Mammary epithelial cell (primary cell): ENCODE measurements at regions of chr12 and their contacts with region 1.

Region 1: DNA sequence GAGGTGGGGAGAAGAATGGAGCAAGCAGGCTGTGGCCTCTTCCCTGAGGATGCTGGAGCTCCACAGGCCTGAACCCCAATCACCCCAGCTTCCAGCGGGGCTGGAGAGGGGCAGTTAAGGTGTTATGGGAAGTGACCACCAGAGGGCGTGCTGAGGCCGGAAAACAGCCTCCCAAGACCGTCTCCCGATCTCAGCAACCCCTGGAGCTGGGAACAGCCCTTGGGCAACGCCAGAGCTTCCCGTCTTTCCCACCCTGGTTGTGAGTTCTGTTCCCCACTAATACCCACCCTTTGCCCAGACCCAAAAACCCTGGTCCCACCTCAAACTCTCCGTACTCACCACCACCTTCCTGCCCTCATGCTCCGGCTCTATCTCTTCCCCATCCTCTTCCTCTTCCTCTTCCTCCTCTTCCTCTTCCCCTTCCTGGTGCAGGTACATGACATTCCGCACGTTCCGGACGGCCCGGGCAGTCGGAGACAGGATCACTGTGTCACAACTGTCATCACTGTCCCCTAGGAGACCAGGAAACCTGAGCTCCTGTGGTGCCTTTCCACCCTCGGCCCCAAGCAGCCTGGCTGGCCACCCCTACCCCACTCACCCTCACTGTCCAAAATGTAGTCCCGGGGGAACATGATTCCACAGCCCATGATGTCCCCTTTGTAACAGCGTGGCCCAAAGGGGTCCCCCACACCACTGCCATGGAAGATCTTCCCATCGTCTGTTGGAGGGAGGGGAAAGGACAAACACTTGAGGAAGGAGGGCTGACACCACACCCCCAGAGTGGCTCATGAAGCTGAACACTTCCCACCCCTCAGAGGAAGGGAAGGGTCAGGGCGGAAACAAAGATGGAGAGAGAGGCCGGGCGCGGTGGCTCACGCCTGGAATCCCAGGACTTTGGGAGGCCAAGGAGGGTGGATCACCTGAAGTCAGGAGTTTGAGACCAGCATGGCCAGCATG is 12.9 kb downstream of the SPRYD3 start:
- DNase-seq: peak; percentile 55
- H3K4me3 ChIP-seq: no peak overlapping the region
- H3K27ac ChIP-seq: no peak overlapping the region
- H3K4me1 ChIP-seq: peaks cover 30% of the 10 kb centered on the region
- H3K27me3 ChIP-seq: no peaks in the 10 kb centered on the region
- CTCF ChIP-seq: peak; percentile 74 to 81

Region 2: DNA sequence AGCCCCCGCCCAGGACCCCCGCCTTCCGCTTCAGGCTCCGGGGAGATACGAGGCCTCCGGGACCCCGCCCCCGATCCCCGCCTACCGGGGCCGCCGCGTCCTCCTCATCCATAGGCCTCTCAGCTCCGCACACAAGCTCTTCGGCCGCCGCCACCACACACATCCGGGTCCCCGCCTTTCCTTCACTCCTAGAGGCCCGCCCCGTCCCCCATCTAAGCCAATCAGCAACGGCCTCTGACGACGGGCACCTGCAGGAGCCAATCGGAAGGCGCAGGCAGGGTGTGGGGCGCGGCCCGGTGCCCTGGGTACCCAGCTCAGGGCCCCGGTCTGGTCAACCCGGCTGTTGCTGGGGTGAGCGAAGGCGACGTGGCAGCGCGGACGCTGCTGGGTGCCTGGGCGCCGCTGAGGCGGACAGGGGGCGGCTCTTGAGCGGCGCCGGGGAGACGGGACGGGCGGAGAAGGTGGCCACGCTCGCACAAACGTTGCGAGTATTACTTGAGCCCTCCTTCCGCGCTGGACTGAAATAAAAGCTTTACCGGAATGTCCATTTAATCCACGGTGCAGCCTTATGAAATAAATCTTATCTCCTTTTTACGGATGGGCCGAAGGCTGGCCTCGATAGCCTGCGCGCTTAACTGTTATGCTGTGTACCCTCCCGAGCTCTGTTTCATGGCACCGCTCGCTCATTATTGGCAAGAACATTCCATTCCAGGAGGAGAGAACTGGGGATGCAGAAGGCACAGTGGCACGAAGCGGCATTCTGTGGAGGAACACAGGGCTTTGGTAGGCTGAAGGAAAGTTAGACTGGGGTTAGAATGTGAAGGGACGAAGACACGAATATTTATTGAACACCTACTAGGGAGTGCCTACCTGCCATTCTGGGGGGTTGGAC is 13.2 kb after region 1 on chr12 and contains the start of gene SPRYD3:
- CTCF ChIA-PET with region 1: no interaction called
- dilution Hi-C with region 1: no loop called
- in situ Hi-C with region 1: no loop called
- intact Hi-C with region 1: loop called (anchors 1 kb)
- DNase-seq: peak; percentile 97
- H3K4me3 ChIP-seq: peak within 1 kb of the TSS; percentile 73 to 77 (median 76)
- H3K27ac ChIP-seq: peak within 1 kb of the TSS; percentile 45
- H3K4me1 ChIP-seq: peaks cover 11% of the 10 kb centered on the region
- H3K27me3 ChIP-seq: no peaks in the 10 kb centered on the region
- CTCF ChIP-seq: no peak
- total RNA-seq, gene SPRYD3: 30.0 to 39.4 TPM

Region 3: DNA sequence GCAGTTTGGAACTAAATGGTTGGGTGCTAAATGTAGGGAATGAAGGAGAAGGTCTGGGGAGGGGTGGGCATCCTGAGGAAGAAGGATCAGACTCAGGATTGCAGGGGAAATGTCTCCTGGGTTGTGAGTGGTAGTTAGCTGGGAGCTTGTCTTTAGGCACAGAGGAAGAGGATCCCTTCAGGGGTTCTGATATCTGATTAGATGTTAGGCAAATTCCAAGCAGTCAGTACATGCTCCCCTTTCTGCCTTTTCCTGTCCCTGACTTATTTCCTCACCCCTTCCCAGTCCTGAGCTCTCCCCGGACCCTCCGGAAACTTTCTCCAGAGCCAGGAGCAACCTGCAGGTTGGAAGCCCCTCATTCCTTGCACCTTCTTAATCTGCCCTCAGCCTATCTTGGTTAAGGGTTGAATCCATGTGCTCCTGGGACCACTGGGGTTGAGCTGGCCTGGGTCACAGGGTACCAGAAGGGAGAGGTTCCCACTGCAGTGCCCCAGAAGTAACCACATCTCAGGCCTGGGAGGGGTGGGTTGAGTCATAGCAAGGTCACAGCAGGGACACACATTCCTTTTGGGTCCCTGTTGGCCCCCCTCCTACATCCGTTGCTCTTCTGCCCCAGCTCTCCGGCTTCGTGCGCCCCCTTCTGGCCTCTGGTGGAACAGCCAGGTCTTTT is 32.9 kb after region 1 on chr12:
- CTCF ChIA-PET with region 1: interaction called, 45 read pairs
- dilution Hi-C with region 1: loop called (anchors 5 kb)
- in situ Hi-C with region 1: loop called (anchors 5 kb)
- intact Hi-C with region 1: loop called (anchors 1 kb)
- DNase-seq: peak; percentile 86
- H3K4me3 ChIP-seq: peak overlapping the region; percentile 61 to 83 (median 79)
- H3K27ac ChIP-seq: peak overlapping the region; percentile 66
- H3K4me1 ChIP-seq: peaks cover 33% of the 10 kb centered on the region
- H3K27me3 ChIP-seq: no peaks in the 10 kb centered on the region
- CTCF ChIP-seq: peak; percentile 88 to 95

Region 4: DNA sequence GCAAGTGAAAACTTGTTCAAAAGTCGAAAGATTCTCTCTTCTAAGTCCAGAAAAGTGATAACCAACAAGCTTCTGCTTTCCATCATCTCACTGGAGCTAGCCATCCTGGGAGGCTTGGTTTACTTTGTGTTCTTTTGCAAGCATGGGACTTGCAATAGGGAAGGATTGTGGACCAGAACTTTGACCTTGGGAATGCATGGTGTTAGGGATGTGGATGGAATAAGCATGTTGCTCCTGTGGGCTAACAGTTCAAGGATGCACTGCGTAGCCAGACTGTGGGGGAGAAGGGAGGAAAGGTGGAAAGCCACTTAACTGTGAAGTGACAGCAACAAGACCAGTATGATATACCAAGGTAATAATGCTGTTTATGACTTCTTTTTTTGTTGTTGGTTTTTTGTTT is 65.6 kb after region 1 on chr12:
- CTCF ChIA-PET with region 1: no interaction called
- dilution Hi-C with region 1: loop called (anchors 5 kb)
- in situ Hi-C with region 1: no loop called
- intact Hi-C with region 1: no loop called
- DNase-seq: no peak
- H3K4me3 ChIP-seq: no peak overlapping the region
- H3K27ac ChIP-seq: no peak overlapping the region
- H3K4me1 ChIP-seq: no peaks in the 10 kb centered on the region
- H3K27me3 ChIP-seq: no peaks in the 10 kb centered on the region
- CTCF ChIP-seq: no peak

Region 5: DNA sequence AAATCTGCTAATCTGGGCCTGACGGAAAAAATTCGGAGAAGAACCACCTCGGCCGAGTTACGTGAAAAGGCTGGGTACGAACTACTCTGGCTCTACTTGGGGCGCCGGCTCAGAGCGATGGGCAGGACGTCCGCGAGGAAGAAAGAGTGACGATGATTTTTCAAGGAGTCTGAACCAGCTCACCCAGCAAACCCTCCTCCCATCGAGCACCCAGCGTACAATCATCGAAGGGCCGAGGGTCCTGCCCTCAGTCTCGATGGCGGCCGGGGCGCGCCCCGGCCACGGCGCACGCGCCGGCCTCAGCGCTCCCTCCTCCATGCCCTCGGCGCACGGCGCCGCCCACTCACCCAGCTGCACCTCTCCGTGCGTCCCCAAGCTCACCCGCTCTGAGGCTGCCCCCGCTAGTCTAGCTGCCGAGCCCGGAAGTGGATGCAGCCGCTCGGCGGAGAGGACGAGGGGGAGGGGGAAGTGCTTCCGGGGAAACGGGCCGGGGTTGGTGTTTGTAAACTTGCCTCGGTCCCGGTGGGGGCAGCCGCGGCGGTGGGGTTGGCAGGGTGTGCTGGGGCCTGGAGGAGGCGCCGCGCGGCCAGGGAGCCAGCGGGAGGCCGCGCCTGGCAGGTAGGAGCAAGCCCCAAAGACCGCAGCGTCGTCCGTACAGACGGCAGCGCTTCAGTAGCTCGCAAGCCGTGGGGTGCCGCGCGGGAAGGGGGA is 114.1 kb after region 1 on chr12 and contains the starts of genes CSAD and ZNF740:
- CTCF ChIA-PET with region 1: no interaction called
- dilution Hi-C with region 1: loop called (anchors 10 kb)
- in situ Hi-C with region 1: no loop called
- intact Hi-C with region 1: loop called (anchors 5 kb)
- DNase-seq: peak; percentile 97
- H3K4me3 ChIP-seq: peak within 1 kb of the TSS; percentile 59 to 84 (median 67)
- H3K27ac ChIP-seq: peak within 1 kb of the TSS; percentile 69
- H3K4me1 ChIP-seq: peaks cover 16% of the 10 kb centered on the region
- H3K27me3 ChIP-seq: no peaks in the 10 kb centered on the region
- CTCF ChIP-seq: no peak
- total RNA-seq, gene CSAD: 10.2 to 22.1 TPM
- total RNA-seq, gene ZNF740: 10.0 to 30.9 TPM

Region 6: GRCh38 chr12:53295070-53295890 is 229.0 kb after region 1 on chr12 and contains the start of gene PFDN5:
- CTCF ChIA-PET with region 1: no interaction called
- dilution Hi-C with region 1: no loop called
- in situ Hi-C with region 1: loop called in 1 of 2 experiments (anchors 25 kb)
- intact Hi-C with region 1: loop called (anchors 10 kb)
- DNase-seq: peak; percentile 83
- H3K4me3 ChIP-seq: peak within 1 kb of the TSS; percentile 33 to 68 (median 58)
- H3K27ac ChIP-seq: peak within 1 kb of the TSS; percentile 58
- H3K4me1 ChIP-seq: peaks cover 25% of the 10 kb centered on the region
- H3K27me3 ChIP-seq: no peaks in the 10 kb centered on the region
- CTCF ChIP-seq: no peak
- total RNA-seq, gene PFDN5: 162 to 187 TPM